ENCODE measurements at regions of chr19 and their contacts with region 1.

Region 1: GRCh38 chr19:35549174-35549788 is 3.9 kb downstream of the TMEM147 start:
- DNase-seq: peak; percentile 69
- ATAC-seq: peak; percentile 70
- H3K4me3 Mint-ChIP-seq: no peak overlapping the region
- H3K27ac Mint-ChIP-seq: peak overlapping the region; percentile 38
- H3K4me1 Mint-ChIP-seq: peaks cover 18% of the 10 kb centered on the region
- H3K27me3 Mint-ChIP-seq: no peaks in the 10 kb centered on the region; the same call in 1 of the 2 replicates
- CTCF ChIP-seq: peak; percentile 68

Region 2: DNA sequence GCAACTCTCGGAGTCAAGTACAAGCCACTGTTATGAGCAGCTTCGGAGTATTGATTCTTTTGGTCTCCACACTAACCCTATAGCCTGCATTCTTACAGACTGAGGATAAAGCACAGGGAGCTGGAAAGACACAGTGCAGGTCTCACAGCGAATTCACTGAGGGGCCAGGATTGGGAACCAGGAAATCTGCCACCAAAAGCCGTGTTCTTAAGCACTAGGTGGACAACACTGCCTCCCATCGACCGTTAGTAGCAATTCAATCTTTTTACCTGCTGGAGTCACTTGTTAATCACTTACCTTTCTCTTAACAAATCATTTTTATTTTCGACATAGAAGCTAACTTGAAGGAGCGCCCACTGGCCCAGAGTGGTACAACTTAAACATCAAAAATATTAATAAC is 42.9 kb after region 1 on chr19:
- CTCF ChIA-PET with region 1: interaction called, 18 read pairs
- POLR2A ChIA-PET with region 1: no interaction called
- DNase-seq: peak; percentile 40
- ATAC-seq: peak; percentile 78
- H3K4me3 Mint-ChIP-seq: no peak overlapping the region
- H3K27ac Mint-ChIP-seq: no peak overlapping the region; the same call in 1 of the 2 replicates
- H3K4me1 Mint-ChIP-seq: no peaks in the 10 kb centered on the region
- H3K27me3 Mint-ChIP-seq: peaks cover 19% of the 10 kb centered on the region
- CTCF ChIP-seq: peak; percentile 43; the same call in 1 of the 2 replicates